ENCODE measurements at regions of chr13 and their contacts with region 1.

Region 1: GRCh38 chr13:26051657-26052311 is at the start of gene SHISA2:
- DNase-seq: no peak
- ATAC-seq: peak; percentile 65 to 69
- H3K4me3 ChIP-seq: peak within 1 kb of the TSS; percentile 54 to 64 (median 59)
- H3K27ac ChIP-seq: peak within 1 kb of the TSS; percentile 59 to 76 (median 72)
- H3K4me1 ChIP-seq: peaks cover 11% of the 10 kb centered on the region in 2 donors
- H3K27me3 ChIP-seq: peaks cover 0 to 9% (median 4%) of the 10 kb centered on the region in 3 donors
- CTCF ChIP-seq: no peak
- POLR2A ChIP-seq: peak; percentile 76 to 90
- total RNA-seq, gene SHISA2: 2.8 to 19.3 (median 3.2) TPM

Region 2: DNA sequence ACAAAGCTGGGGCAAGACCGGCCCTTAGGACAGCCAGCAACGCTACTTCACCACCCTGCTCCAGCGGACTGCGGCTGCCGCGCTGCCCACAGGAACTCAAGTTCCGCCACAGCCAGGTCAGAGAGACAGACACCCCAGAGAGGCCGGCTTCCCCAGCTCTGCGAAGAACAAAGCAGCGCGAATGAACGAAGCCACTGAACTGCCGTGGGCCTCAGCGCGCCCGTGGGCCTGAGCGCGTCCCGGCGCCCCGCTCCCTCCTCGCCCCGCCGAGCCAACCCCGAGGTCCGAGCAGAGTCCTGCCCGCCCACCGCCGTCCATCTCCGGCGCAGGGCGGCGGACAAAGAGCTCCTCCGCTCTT is 1129.4 kb before region 1 on chr13:
- in situ Hi-C with region 1: no loop called
- intact Hi-C with region 1: no loop called
- DNase-seq: no peak
- ATAC-seq: peak; percentile 24 to 28
- H3K4me3 ChIP-seq: peak overlapping the region; percentile 69 to 96 (median 83)
- H3K27ac ChIP-seq: peak overlapping the region; percentile 94 to 98 (median 94)
- H3K4me1 ChIP-seq: peaks cover 0 to 7% of the 10 kb centered on the region in 2 donors
- H3K27me3 ChIP-seq: no peaks in the 10 kb centered on the region
- CTCF ChIP-seq: no peak
- POLR2A ChIP-seq: no peak

Region 3: GRCh38 chr13:25874907-25875306 is 176.9 kb before region 1 on chr13:
- in situ Hi-C with region 1: no loop called
- intact Hi-C with region 1: loop called (anchors 5 kb)
- DNase-seq: no peak
- ATAC-seq: no peak
- H3K4me3 ChIP-seq: no peak overlapping the region
- H3K27ac ChIP-seq: no peak overlapping the region
- H3K4me1 ChIP-seq: peaks cover 11 to 21% of the 10 kb centered on the region in 2 donors
- H3K27me3 ChIP-seq: no peaks in the 10 kb centered on the region
- CTCF ChIP-seq: no peak
- POLR2A ChIP-seq: no peak

Region 4: GRCh38 chr13:25971459-25972145 is 80.2 kb before region 1 on chr13:
- in situ Hi-C with region 1: no loop called
- intact Hi-C with region 1: loop called (anchors 5 kb)
- DNase-seq: no peak
- ATAC-seq: no peak
- H3K4me3 ChIP-seq: no peak overlapping the region
- H3K27ac ChIP-seq: no peak overlapping the region
- H3K4me1 ChIP-seq: peaks cover 9 to 12% of the 10 kb centered on the region in 2 donors
- H3K27me3 ChIP-seq: no peaks in the 10 kb centered on the region
- CTCF ChIP-seq: no peak
- POLR2A ChIP-seq: no peak

Region 5: DNA sequence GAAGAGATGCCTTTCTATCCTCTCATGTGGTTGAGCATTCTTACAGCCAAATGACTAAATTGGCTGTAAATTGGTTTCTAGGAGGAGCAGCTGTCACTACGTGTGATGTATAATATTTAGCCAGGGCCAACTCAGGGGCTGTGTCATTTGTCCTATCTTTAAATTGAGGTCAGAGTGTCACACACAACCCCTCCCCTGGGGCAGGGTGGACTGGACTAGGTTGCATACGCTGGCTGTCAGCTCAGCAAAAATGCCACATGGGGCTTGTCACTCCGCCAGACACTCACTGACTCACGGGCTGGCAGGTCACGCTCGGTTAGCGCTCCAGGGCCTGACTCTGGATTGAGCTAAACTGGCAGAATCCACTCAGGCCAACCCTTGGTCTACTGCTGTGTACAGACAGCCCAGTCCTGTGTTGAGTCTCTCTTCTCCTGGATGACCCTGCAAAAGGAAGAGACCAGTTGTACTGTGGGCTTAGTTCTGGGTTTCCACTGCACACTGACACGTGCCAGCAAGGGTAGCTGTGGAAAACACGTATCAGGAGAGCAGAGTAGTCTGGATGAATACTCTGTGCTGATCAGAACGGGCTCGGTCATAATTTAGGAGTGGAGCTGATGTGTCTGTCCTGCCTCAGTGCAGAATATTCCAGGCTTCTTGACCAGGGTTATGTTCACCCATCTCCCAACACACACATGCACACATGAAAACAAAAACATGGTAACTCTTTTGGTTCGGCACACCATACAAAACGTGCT is 29.1 kb before region 1 on chr13:
- in situ Hi-C with region 1: no loop called
- intact Hi-C with region 1: loop called (anchors 2 kb)
- DNase-seq: peak; percentile 90 to 92
- ATAC-seq: peak; percentile 92 to 94
- H3K4me3 ChIP-seq: no peak overlapping the region
- H3K27ac ChIP-seq: peak overlapping the region; percentile 70 to 83 (median 74)
- H3K4me1 ChIP-seq: peaks cover 29 to 37% of the 10 kb centered on the region in 2 donors
- H3K27me3 ChIP-seq: no peaks in the 10 kb centered on the region
- CTCF ChIP-seq: no peak
- POLR2A ChIP-seq: no peak

Measured in gastrocnemius medialis (tissue), 4 donors.